Activated CD4-positive, alpha-beta memory T cell treated with anti-CD3 and anti-CD28 coated beads for 36 hours (primary cell): ENCODE measurements at regions of chr3 and their contacts with region 1.

Region 1: DNA sequence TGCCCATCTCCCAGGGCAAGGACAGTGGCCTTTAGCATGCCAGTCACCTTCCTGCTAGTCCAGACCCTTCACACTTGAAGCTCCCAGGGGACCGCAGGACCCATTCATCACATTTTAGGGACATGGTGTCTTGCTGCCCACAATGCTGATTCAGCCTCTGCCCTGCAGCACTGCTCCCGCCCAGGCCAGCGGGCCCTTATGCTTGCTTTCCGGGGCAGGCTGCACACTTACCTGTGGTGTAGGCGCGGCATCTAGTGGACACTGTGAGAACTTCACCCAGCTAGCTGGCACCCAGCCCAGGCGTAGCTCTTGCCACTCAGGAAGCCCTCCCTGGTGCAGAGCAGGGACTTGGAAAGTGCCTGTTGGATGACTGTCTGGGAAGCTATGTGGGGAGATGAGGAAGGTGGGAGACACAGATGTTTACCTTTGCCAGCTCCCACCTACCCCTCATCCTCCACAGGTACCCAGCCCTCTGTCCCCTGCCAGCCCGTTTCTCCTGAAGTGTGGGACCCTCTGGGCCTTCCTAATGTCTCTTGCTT is 26.2 kb upstream of the NR2C2 start:
- DNase-seq: peak; percentile 88
- H3K4me3 Mint-ChIP-seq: no peak overlapping the region
- H3K27ac Mint-ChIP-seq: no peak overlapping the region
- H3K4me1 Mint-ChIP-seq: no peaks in the 10 kb centered on the region
- H3K27me3 Mint-ChIP-seq: no peaks in the 10 kb centered on the region

Region 2: DNA sequence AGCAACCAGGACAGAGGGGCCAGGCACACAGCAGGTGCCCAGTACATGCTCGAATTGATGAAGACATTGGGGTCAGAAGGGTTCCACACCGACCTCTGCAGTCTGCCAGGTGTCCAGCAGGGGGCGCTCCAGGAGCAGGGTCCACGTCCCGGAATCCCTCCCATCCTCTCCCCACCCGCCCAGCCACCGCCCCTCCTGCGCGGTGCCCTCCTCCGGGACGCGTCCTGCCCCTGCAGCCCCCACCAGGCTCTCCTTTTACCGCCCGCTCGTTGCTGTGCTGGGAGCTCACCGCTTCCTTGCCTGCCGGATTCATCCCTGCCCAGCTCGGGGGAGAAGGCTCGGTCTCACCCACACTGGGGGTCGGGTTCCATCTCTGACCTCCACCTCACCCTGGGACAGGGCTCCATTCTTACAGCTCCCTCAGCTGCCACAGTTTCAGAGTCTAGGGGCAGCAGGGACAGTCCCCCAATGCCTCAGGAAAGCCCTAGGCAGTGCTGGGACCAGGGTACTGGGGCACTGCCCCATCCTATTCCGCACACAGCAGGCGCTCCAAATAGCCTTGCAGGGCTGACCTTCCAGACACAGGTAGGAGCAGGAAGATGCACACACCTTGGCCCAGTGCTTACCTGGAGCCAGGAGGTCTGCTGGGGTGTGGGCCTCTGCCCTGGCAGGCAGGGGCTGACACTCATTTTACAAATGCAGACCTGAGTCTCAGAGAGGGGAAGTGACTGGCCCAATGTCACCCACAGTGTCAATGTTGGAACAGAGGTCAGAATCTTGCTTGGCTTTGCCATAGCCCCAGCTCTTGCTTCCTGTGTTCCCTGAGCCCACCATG is 412.0 kb before region 1 on chr3:
- CTCF ChIA-PET with region 1: interaction called, 10 read pairs
- POLR2A ChIA-PET with region 1: no interaction called
- intact Hi-C with region 1: loop called (anchors 2 kb)
- DNase-seq: peak; percentile 82
- H3K4me3 Mint-ChIP-seq: no peak overlapping the region
- H3K27ac Mint-ChIP-seq: no peak overlapping the region
- H3K4me1 Mint-ChIP-seq: peaks cover 5% of the 10 kb centered on the region
- H3K27me3 Mint-ChIP-seq: peaks cover 3% of the 10 kb centered on the region

Region 3: GRCh38 chr3:14633819-14634424 is 287.2 kb before region 1 on chr3:
- CTCF ChIA-PET with region 1: interaction called, 27 read pairs
- POLR2A ChIA-PET with region 1: interaction called, 4 read pairs
- intact Hi-C with region 1: loop called (anchors 1 kb)
- DNase-seq: peak; percentile 69
- H3K4me3 Mint-ChIP-seq: no peak overlapping the region
- H3K27ac Mint-ChIP-seq: no peak overlapping the region
- H3K4me1 Mint-ChIP-seq: no peaks in the 10 kb centered on the region
- H3K27me3 Mint-ChIP-seq: peaks cover 20% of the 10 kb centered on the region

Region 4: DNA sequence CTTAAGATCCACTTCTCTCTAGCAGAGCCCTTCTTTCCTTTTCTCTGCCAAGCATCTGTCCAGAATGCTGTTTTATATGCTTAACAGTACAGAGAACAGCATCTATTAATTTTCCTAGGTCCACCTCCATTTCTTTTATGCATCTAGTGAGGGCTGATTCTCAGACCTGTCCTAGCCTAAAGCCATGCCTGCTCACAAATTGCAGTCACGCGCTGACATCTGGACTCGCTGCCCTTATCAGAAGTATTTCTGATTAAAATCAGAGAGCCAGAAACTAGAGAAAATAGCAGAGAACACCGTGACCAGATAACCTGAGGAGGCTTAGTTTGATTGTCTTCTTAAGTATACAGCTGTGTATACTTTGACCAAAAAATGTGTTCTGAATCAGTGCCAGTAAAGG is 244.3 kb before region 1 on chr3:
- CTCF ChIA-PET with region 1: interaction called, 11 read pairs
- POLR2A ChIA-PET with region 1: no interaction called
- intact Hi-C with region 1: no loop called
- DNase-seq: no peak
- H3K4me3 Mint-ChIP-seq: no peak overlapping the region
- H3K27ac Mint-ChIP-seq: no peak overlapping the region
- H3K4me1 Mint-ChIP-seq: no peaks in the 10 kb centered on the region
- H3K27me3 Mint-ChIP-seq: no peaks in the 10 kb centered on the region

Region 5: DNA sequence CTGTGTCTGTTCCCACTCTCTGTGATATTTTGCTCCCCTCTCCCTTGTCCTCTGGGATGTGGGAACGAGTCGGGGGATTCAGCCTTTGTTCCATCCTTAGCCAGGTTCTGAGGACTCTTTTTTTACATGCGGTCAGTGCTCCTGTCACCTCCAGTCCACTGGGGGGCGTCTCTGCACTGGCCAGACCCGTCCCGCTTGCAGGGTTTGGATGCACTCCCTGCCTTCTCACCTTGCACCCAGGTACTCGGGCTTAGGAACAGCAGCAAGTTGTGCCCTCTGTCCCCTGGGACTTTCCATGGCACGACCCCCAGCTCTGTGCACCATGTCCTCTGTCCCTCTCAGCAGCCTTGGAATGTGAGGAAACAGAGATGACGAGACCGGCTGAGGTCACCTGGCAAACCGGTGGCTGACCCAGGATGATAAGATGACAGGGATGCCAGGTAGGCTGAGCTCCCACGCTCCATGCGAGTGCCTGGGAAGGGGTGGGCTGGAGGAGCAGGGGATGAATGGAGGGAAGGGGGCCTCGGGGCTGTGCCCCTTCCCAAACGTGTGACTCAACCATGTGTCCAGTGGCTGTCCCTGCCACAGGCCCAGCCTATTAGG is 129.7 kb before region 1 on chr3:
- CTCF ChIA-PET with region 1: interaction called, 36 read pairs
- POLR2A ChIA-PET with region 1: no interaction called
- intact Hi-C with region 1: loop called (anchors 1 kb)
- DNase-seq: peak; percentile 72
- H3K4me3 Mint-ChIP-seq: no peak overlapping the region
- H3K27ac Mint-ChIP-seq: no peak overlapping the region
- H3K4me1 Mint-ChIP-seq: no peaks in the 10 kb centered on the region
- H3K27me3 Mint-ChIP-seq: peaks cover 18% of the 10 kb centered on the region

Region 6: DNA sequence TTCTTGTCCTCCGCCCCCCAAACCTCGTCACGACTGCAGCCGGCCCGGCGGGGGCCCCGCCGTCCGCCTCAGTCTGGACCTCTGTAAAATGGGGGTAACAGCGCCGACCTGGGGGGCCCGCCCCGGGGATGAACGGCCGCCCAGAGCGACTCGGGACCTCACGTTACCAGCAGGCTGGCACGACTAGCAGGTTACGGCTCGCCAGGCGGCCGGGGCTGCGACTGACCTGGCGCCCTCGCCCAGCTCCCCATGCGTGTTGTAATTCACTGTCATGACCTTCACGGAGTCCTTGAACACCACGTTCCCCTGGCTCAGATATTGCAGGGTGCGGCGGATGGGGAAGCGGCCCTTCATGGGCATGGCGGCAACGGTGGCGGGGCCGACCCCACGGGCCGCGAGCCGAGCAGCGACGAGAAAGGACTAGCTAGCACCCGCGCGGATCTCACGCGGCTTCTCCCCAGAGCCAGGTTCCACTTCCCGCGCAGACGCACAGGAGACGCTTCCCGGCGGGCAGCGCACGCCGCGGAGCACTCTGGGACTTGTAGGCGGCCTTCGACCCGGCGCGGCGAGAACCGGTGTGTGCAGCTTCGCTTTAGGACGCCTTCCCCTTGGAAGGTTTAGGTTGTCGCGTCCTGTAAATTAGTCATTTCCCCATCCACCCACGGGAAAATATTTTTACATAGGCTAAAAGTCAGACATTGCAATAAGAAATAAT is 143.8 kb after region 1 on chr3 and contains the start of gene MRPS25:
- CTCF ChIA-PET with region 1: interaction called, 11 read pairs
- POLR2A ChIA-PET with region 1: interaction called, 3 read pairs
- intact Hi-C with region 1: no loop called
- DNase-seq: peak; percentile 95
- H3K4me3 Mint-ChIP-seq: peak within 1 kb of the TSS; percentile 96
- H3K27ac Mint-ChIP-seq: peak within 1 kb of the TSS; percentile 90
- H3K4me1 Mint-ChIP-seq: peaks cover 22% of the 10 kb centered on the region
- H3K27me3 Mint-ChIP-seq: no peaks in the 10 kb centered on the region
- total RNA-seq, gene MRPS25: 53.8 to 58.5 TPM

Region 7: DNA sequence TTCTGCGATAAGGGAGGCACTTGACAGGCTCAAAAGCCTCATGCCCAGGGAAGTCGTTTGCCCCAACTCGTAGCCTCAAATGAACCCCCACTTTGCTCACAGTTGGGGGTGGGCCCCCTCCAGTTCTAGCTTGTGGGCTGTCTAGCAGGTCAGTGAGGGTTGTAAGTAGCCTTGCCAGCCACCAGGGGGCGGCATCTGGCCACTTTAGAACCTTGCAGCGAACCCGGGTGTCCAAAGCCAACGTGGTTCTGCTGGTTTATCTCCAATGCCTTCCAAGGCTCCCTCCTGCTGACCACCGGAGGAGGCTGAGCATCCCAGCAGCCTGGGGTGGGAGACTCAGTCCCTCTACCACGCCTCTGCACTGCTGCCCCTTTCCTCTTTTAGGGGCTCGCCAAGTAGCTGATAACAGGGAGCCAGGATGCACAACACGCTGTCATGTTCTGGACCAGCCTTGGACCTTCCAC is 187.0 kb after region 1 on chr3:
- CTCF ChIA-PET with region 1: no interaction called
- POLR2A ChIA-PET with region 1: no interaction called
- intact Hi-C with region 1: loop called (anchors 1 kb)
- DNase-seq: peak; percentile 80
- H3K4me3 Mint-ChIP-seq: peak overlapping the region; percentile 5
- H3K27ac Mint-ChIP-seq: no peak overlapping the region
- H3K4me1 Mint-ChIP-seq: no peaks in the 10 kb centered on the region
- H3K27me3 Mint-ChIP-seq: peaks cover 6% of the 10 kb centered on the region

Region 8: DNA sequence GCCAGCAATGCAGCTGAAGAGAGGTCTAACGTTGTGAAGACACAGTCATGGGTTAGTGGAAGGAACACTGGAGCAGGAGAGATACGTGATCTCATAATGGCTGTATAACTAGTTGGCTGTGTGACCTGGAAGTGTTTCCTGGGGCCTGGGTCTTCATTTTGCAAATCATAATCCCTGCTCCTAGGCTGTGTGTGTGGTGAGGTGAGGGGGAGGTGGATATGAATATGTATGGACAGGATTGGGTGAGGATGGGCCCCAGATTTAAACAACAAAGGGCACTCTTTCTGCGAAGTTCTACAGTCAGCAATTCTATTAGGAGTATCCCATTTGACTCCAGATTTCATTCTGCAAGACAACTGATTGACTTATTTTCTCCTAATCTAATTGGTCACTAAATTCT is 835.4 kb after region 1 on chr3:
- CTCF ChIA-PET with region 1: no interaction called
- POLR2A ChIA-PET with region 1: no interaction called
- intact Hi-C with region 1: no loop called
- DNase-seq: no peak
- H3K4me3 Mint-ChIP-seq: no peak overlapping the region
- H3K27ac Mint-ChIP-seq: no peak overlapping the region
- H3K4me1 Mint-ChIP-seq: peaks cover 15% of the 10 kb centered on the region
- H3K27me3 Mint-ChIP-seq: no peaks in the 10 kb centered on the region